ENCODE measurements at regions of chr11 and their contacts with region 1.

Region 1: GRCh38 chr11:66638177-66639065 is at the start of gene RBM4:
- DNase-seq: peak; percentile 98
- H3K4me3 Mint-ChIP-seq: peak within 1 kb of the TSS; percentile 94
- H3K27ac Mint-ChIP-seq: peak within 1 kb of the TSS; percentile 96
- H3K4me1 Mint-ChIP-seq: peaks cover 65% of the 10 kb centered on the region
- H3K27me3 Mint-ChIP-seq: no peaks in the 10 kb centered on the region

Region 2: GRCh38 chr11:66651016-66651415 is 12.6 kb after region 1 on chr11:
- CTCF ChIA-PET with region 1: no interaction called
- DNase-seq: no peak
- H3K4me3 Mint-ChIP-seq: no peak overlapping the region
- H3K27ac Mint-ChIP-seq: no peak overlapping the region
- H3K4me1 Mint-ChIP-seq: peaks cover 18% of the 10 kb centered on the region
- H3K27me3 Mint-ChIP-seq: no peaks in the 10 kb centered on the region

Region 3: GRCh38 chr11:66677599-66678375 is 39.4 kb after region 1 on chr11 and contains the start of gene RBM4B:
- CTCF ChIA-PET with region 1: interaction called, 10 read pairs
- DNase-seq: peak; percentile 97
- H3K4me3 Mint-ChIP-seq: peak within 1 kb of the TSS; percentile 96
- H3K27ac Mint-ChIP-seq: peak within 1 kb of the TSS; percentile 99
- H3K4me1 Mint-ChIP-seq: peaks cover 39% of the 10 kb centered on the region
- H3K27me3 Mint-ChIP-seq: peaks cover 3% of the 10 kb centered on the region

Region 4: DNA sequence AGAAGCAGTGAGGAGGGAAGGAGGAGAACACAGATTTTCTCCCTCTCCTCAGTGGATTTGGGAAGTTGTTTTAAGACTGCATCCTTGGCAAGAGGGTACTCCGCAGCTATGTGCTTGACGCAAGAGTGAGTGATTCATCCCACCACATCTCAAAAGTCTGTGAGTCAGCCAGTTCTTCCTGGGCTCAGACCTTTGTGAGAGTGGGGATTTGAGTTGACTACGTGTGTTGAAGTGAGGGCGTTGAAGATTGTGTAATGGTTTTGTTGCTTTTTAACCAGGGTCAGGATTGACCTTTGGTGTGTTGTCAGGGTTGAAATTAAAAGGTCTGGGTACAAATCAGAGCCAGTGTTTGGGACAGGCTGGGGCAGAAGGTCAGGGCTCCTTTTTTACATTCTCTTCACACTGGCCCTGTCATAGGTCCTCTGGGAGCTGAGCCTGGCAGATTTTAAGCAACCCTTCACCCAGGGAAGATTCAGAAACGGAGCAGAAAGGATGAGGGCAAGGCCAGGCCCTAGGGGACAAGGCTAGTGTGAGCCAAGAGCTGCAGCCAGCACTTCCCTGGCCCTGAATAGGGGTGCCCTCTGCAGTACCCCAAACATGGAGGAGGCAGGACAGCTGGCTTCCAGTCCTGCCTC is 332.5 kb after region 1 on chr11:
- CTCF ChIA-PET with region 1: no interaction called
- DNase-seq: no peak
- H3K4me3 Mint-ChIP-seq: no peak overlapping the region
- H3K27ac Mint-ChIP-seq: no peak overlapping the region
- H3K4me1 Mint-ChIP-seq: peaks cover 12% of the 10 kb centered on the region
- H3K27me3 Mint-ChIP-seq: peaks cover 18% of the 10 kb centered on the region

Measured in activated naive CD4-positive, alpha-beta T cell treated with anti-CD3 and anti-CD28 coated beads, Interleukin-2, amount 10 ng/mL, durations not matched to agents 7 days and 5 days (primary cell).